A549 (cell line): ENCODE measurements at regions of chr11 and their contacts with region 1.

Region 1: DNA sequence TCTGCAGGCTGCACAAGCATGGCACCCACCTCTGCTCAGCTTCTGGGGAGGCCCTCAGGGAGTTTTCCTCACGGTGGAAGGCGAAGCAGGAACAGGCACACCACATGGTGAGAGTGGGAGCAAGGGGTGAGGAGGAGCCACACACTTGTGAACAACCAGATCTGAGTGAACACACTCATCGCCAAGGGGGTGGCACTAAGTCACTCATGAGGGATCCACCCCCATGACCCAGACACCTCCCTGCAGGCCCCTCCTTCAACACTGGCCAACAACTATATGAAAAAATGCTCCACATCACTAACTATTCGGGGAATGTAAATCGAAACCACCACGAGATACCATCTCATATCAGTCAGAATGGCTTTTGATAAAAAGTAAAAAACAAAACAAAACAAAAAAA is 722 bp upstream of the KRTAP5-2 start:
- DNase-seq: no peak
- ATAC-seq: no peak
- H3K4me3 ChIP-seq: no peak overlapping the region
- H3K27ac ChIP-seq: no peak overlapping the region
- H3K4me1 ChIP-seq: no peaks in the 10 kb centered on the region
- CTCF ChIP-seq: no peak
- EP300 ChIP-seq: no peak
- POLR2A ChIP-seq: no peak
- RAD21 ChIP-seq: no peak

Region 2: GRCh38 chr11:1559119-1559951 is 39.5 kb before region 1 on chr11:
- CTCF ChIA-PET with region 1: interaction called, 11 read pairs
- POLR2A ChIA-PET with region 1: no interaction called
- DNase-seq: peak; percentile 65 to 74
- ATAC-seq: peak; percentile 41 to 45
- H3K4me3 ChIP-seq: peak overlapping the region; percentile 21; the same call in 2 of the 3 replicates
- H3K27ac ChIP-seq: peak overlapping the region; percentile 86 to 90
- H3K4me1 ChIP-seq: peaks cover 57% of the 10 kb centered on the region
- CTCF ChIP-seq: no peak
- EP300 ChIP-seq: peak in 1 of 2 experiments; percentile 31; a peak in 2 of 5 replicates
- POLR2A ChIP-seq: no peak
- RAD21 ChIP-seq: no peak

Region 3: DNA sequence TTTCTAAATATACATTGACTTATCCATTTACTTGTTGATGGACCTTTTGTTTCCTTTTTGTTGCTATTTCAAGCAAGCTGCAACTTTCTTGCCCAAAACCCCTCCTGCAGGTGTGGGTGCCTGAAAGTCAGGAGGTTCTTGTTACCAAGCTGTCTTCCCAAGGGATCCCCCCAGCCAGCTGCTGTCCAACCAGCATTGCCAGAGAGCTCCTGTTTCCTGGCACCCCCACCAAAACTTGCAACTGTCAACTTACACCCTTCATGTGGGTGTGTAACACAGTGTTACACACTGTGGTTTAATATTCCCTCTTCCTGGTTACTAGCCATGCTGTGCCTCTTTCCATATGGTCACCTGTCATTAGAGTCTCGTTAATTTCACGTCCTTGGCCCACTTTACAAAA is 12.1 kb before region 1 on chr11:
- CTCF ChIA-PET with region 1: interaction called, 13 read pairs
- POLR2A ChIA-PET with region 1: no interaction called
- DNase-seq: no peak
- ATAC-seq: no peak
- H3K4me3 ChIP-seq: no peak overlapping the region
- H3K27ac ChIP-seq: no peak overlapping the region
- H3K4me1 ChIP-seq: peaks cover 15% of the 10 kb centered on the region
- CTCF ChIP-seq: no peak
- EP300 ChIP-seq: no peak
- POLR2A ChIP-seq: no peak
- RAD21 ChIP-seq: no peak

Region 4: GRCh38 chr11:1618231-1618630 is 19.4 kb after region 1 on chr11:
- CTCF ChIA-PET with region 1: interaction called, 11 read pairs
- POLR2A ChIA-PET with region 1: no interaction called
- DNase-seq: no peak
- ATAC-seq: no peak
- H3K4me3 ChIP-seq: no peak overlapping the region
- H3K27ac ChIP-seq: no peak overlapping the region
- H3K4me1 ChIP-seq: no peaks in the 10 kb centered on the region
- CTCF ChIP-seq: no peak
- EP300 ChIP-seq: no peak
- POLR2A ChIP-seq: no peak
- RAD21 ChIP-seq: no peak

Region 5: GRCh38 chr11:1669661-1670218 is 70.9 kb after region 1 on chr11:
- CTCF ChIA-PET with region 1: no interaction called
- POLR2A ChIA-PET with region 1: no interaction called
- DNase-seq: no peak
- ATAC-seq: no peak; a peak in 1 of 6 replicates
- H3K4me3 ChIP-seq: no peak overlapping the region
- H3K27ac ChIP-seq: no peak overlapping the region
- H3K4me1 ChIP-seq: no peaks in the 10 kb centered on the region
- CTCF ChIP-seq: no peak
- EP300 ChIP-seq: no peak
- POLR2A ChIP-seq: no peak
- RAD21 ChIP-seq: no peak